Activated CD8-positive, alpha-beta T cell treated with anti-CD3 and anti-CD28 coated beads, Interleukin-2, amount 10 ng/mL, durations not matched to agents 7 days and 5 days (primary cell): ENCODE measurements at regions of chr6 and their contacts with region 1.

Region 1: GRCh38 chr6:2841264-2842138 is at the start of gene SERPINB1:
- DNase-seq: peak; percentile 86
- ATAC-seq: peak; percentile 86
- H3K4me3 Mint-ChIP-seq: peak within 1 kb of the TSS; percentile 78
- H3K27ac Mint-ChIP-seq: peak within 1 kb of the TSS; percentile 78
- H3K4me1 Mint-ChIP-seq: peaks cover 58% of the 10 kb centered on the region
- H3K27me3 Mint-ChIP-seq: no peaks in the 10 kb centered on the region
- total RNA-seq, gene SERPINB1: 55.1 to 57.1 TPM

Region 2: DNA sequence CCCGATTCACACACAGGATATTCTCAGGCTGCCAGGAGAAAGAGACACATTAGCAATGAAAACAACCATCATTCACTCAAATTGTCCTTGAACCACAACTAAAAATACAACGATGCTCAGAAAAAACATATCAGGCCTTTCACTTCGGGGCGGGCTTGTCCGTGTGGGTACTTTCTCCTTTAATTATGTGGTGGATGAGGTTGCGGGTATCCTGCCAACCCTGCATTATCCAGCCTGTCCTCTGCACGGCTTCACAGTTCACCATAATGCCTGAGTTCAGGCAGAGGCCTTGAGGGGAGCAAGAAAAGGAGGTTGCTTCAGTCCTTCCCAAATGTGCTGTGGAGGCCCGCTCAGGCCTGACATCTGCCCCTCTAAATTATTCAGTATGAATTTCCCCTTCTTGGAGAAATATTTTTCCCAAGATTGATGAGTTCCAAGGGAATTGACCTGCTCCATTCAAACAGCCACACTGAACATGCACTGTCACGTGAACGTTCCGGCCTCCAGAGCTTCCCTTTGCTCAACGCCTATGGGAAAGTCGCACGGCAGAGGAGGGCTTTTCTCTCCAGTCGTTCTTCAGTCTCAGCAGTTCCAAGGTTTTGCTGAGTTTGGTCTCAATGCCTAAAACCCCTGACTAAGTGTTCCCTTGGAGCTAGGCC is 161.1 kb before region 1 on chr6:
- CTCF ChIA-PET with region 1: no interaction called
- POLR2A ChIA-PET with region 1: no interaction called
- DNase-seq: no peak
- ATAC-seq: no peak
- H3K4me3 Mint-ChIP-seq: no peak overlapping the region
- H3K27ac Mint-ChIP-seq: no peak overlapping the region
- H3K4me1 Mint-ChIP-seq: no peaks in the 10 kb centered on the region
- H3K27me3 Mint-ChIP-seq: no peaks in the 10 kb centered on the region

Region 3: GRCh38 chr6:2756687-2757224 is 84.7 kb before region 1 on chr6:
- CTCF ChIA-PET with region 1: no interaction called
- POLR2A ChIA-PET with region 1: no interaction called
- DNase-seq: no peak
- ATAC-seq: no peak
- H3K4me3 Mint-ChIP-seq: no peak overlapping the region
- H3K27ac Mint-ChIP-seq: no peak overlapping the region
- H3K4me1 Mint-ChIP-seq: peaks cover 25% of the 10 kb centered on the region
- H3K27me3 Mint-ChIP-seq: peaks cover 23% of the 10 kb centered on the region

Region 4: GRCh38 chr6:2866181-2866846 is 24.8 kb after region 1 on chr6:
- CTCF ChIA-PET with region 1: interaction called, 32 read pairs
- POLR2A ChIA-PET with region 1: interaction called, 5 read pairs
- DNase-seq: no peak
- ATAC-seq: no peak
- H3K4me3 Mint-ChIP-seq: no peak overlapping the region
- H3K27ac Mint-ChIP-seq: no peak overlapping the region
- H3K4me1 Mint-ChIP-seq: peaks cover 60% of the 10 kb centered on the region
- H3K27me3 Mint-ChIP-seq: no peaks in the 10 kb centered on the region

Region 5: GRCh38 chr6:2911171-2911570 is 69.7 kb after region 1 on chr6:
- CTCF ChIA-PET with region 1: interaction called, 83 read pairs
- POLR2A ChIA-PET with region 1: interaction called, 16 read pairs
- DNase-seq: no peak
- ATAC-seq: no peak
- H3K4me3 Mint-ChIP-seq: no peak overlapping the region
- H3K27ac Mint-ChIP-seq: no peak overlapping the region
- H3K4me1 Mint-ChIP-seq: peaks cover 41% of the 10 kb centered on the region
- H3K27me3 Mint-ChIP-seq: no peaks in the 10 kb centered on the region

Region 6: DNA sequence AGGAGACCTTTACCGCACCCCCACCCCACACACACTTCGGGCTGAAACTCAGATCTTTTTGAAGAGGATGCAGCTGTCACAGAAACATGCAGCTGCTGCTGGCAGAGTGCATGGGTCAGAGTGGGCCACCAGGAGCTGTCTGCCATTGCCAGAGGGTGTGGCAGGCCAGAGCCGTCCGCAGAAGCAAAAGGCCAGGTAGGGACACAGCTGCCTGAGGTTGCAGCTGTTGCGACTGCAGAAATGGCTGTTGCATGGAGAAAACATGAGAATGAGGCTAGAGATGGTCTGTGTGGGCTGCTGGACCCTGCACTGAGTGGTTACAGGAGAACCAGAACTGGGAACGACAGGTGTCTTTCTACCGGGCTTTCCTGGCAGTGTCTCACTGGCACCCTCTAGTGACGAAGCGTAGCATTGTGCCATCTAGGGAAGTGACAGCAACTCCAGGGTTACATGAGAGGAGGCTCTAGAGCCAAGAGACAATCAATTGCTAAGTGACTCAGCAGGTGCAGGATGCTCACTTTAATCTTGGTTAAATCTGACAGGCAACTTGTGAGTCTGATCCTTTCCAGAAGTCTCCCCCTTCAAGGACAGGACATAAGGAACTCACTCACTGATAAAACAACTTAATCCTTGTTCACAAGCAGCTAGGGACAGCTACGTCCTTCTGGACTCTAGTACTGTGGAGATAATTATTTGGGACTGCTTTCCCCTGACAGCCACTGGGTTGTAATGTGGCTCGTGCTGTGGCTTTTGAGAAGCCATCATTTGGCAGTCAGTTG is 90.7 kb after region 1 on chr6:
- CTCF ChIA-PET with region 1: interaction called, 267 read pairs
- POLR2A ChIA-PET with region 1: interaction called, 12 read pairs
- DNase-seq: peak; percentile 91
- ATAC-seq: peak; percentile 91
- H3K4me3 Mint-ChIP-seq: no peak overlapping the region
- H3K27ac Mint-ChIP-seq: no peak overlapping the region
- H3K4me1 Mint-ChIP-seq: peaks cover 22% of the 10 kb centered on the region
- H3K27me3 Mint-ChIP-seq: no peaks in the 10 kb centered on the region